ENCODE measurements at regions of chr6 and their contacts with region 1.

Region 1: GRCh38 chr6:85678602-85679444 is 36.1 kb upstream of the SYNCRIP start:
- DNase-seq: peak; percentile 99

Region 2: GRCh38 chr6:85537055-85537494 is 141.7 kb before region 1 on chr6:
- intact Hi-C with region 1: loop called (anchors 5 kb)
- DNase-seq: no peak

Region 3: GRCh38 chr6:85593438-85594196 is 85.2 kb before region 1 on chr6 and contains the start of gene SNX14:
- intact Hi-C with region 1: loop called (anchors 5 kb)
- DNase-seq: peak; percentile 98
- total RNA-seq, gene SNX14: 43.0 TPM

Region 4: GRCh38 chr6:85642774-85643536 is 35.9 kb before region 1 on chr6 and contains the start of gene SYNCRIP:
- intact Hi-C with region 1: loop called (anchors 1 kb)
- DNase-seq: peak; percentile 100
- total RNA-seq, gene SYNCRIP: 73.1 TPM